Activated T-helper 1 cell treated with anti-CD3 and anti-CD28 coated beads, Interleukin-12 subunit alpha, Interleukin-12 subunit beta, Interleukin-2, Interleukin-4 antibody, amounts not matched to agents 30 ng/mL and 10 ng/mL and 1 ng/mL, durations not matched to agents 14 hours and 24 hours and 36 hours (primary cell): ENCODE measurements at regions of chr11 and their contacts with region 1.

Region 1: DNA sequence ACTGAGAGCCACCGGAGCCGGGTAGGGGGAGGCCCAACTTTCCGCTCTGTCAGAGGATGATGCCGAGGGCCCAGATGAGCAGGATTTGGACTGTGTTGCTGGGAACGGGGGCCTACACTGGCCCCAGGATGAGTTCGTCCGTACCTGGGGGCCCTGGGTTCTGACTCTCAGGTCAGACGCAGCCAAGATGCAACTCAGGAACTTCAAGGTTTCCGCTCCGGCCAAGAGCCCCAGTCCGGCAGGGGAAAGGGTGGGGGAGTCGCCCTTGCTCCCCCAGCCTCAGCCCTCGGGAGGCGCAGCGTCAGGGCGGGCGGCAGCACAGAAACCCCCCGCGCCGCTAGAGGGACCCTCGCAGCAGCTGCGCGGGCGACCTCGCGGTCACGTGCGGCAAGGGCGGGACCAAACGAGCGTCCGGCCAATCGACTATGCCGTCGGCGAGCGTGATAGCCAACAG is 241 bp upstream of the ARL2 start:
- DNase-seq: peak; percentile 83
- H3K4me3 Mint-ChIP-seq: peak overlapping the region; percentile 90
- H3K27ac Mint-ChIP-seq: peak overlapping the region; percentile 99
- H3K4me1 Mint-ChIP-seq: peaks cover 22% of the 10 kb centered on the region
- H3K27me3 Mint-ChIP-seq: peaks cover 2% of the 10 kb centered on the region

Region 2: DNA sequence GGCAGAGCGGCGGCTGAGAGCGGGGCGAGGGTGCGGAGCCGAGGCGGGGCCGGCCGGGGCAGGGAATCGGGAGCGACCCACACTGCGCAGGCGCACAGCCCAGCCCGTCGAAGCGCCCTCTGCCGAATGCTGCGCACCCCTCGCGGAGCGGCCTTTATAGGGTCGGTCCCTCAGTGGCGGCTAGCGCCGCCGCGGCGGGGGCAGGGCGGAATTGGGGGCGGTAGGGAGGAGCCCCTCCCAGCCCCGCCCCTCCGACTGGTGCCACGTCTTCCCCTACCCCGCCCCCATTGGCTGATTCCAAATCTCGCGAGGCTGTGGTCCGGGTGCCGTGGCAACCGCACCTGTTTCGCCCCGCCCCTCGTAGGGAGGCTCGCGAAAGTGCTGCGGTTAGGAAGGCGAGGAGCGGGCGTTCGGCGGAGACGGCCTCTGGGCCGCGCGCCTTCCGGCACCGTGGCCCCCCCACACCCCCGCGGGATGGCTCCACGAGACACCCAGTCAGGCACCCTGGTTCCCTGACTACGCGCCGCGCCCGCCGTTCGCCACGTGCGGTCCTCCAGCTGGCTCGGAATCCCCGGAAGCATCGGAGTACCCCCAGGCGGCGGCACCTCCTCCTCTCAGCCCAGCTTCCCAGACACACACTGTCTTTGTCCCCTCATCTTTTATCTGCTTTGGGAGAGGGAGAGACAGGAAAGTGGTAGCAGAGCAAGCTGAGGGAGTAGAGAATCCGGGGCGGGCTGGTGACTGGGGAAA is 135.1 kb before region 1 on chr11 and contains the start of gene EHD1:
- intact Hi-C with region 1: loop called (anchors 2 kb)
- DNase-seq: peak; percentile 99
- H3K4me3 Mint-ChIP-seq: peak within 1 kb of the TSS; percentile 99
- H3K27ac Mint-ChIP-seq: peak within 1 kb of the TSS; percentile 83
- H3K4me1 Mint-ChIP-seq: peaks cover 64% of the 10 kb centered on the region
- H3K27me3 Mint-ChIP-seq: no peaks in the 10 kb centered on the region
- total RNA-seq, gene EHD1: 88.0 and 96.9 TPM in 2 replicates

Region 3: DNA sequence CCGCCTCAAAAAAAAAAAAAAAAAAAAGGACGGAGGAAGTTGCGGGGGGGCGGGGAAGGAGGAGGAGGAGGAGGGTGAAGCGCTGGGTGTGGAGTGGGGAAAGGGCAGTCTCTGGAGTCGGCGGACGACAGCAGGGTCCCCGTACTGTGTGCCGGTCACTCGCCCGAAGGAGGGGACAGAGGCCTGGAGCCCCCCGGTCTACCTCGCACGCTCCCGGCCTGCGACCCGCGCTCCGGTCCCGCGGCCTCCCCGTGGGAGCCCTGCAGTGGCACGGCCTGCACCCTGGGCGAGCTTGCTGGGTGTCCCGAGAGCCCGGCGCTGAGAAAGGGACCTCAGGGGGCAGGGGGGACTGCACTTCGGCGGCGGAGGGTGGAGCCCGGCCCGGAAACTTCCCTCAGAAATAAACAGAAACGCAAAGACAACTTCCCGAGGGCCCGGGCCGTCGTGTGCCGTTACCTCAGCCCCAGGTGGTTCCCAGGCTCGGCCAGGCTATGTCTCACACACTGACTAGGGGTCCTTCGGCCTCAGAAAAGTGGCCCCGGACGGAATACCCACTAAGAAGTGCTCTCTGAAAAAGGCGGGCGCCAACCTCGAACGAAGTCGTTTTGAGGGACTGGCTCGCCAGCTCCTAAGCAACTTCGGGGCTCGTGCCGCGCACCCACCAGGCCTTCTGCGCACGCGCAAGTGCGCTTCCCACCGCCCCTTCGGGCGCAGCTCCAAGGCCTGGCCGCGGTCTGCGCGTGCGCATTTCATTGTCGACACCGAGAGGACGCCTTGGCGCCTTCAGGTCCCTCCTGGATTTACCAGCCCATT is 42.1 kb before region 1 on chr11 and contains the start of gene MAJIN:
- intact Hi-C with region 1: loop called (anchors 5 kb)
- DNase-seq: peak; percentile 77
- H3K4me3 Mint-ChIP-seq: peak within 1 kb of the TSS; percentile 57
- H3K27ac Mint-ChIP-seq: peak within 1 kb of the TSS; percentile 60
- H3K4me1 Mint-ChIP-seq: peaks cover 31% of the 10 kb centered on the region
- H3K27me3 Mint-ChIP-seq: peaks cover 4% of the 10 kb centered on the region
- total RNA-seq, gene MAJIN: not detected in 2 replicates

Region 4: DNA sequence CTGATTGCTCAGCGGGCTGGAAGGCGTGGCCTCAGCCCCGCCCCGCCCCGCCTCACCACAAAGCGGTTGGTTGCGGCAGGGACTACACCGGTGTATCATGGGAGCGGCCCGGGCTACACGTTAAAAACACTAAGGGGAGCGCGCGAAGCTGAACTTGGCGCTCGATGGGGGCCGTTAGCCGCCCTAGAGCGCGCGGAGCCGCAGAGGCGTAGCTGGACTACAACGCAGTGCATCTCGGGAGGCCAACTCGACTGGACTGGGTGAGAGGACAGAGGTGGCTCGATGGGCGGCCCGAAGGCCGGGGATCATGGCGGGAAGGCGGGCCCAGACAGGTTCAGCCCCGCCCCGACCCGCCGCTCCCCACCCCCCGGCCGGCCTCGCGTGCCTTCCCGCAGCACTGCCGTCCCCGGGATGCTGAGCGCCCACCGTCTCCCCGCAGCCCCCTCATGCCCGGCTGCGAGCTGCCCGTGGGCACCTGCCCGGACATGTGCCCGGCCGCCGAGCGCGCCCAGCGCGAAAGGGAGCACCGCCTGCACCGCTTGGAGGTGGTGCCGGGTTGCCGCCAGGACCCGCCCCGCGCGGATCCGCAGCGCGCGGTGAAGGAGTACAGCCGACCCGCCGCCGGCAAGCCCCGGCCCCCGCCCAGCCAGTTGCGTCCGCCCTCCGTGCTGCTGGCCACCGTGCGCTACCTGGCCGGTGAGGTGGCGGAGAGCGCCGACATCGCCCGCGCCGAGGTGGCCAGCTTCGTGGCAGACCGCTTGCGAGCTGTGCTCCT is 27.3 kb after region 1 on chr11 and contains the start of gene SAC3D1:
- intact Hi-C with region 1: loop called (anchors 1 kb)
- DNase-seq: peak; percentile 90
- H3K4me3 Mint-ChIP-seq: peak within 1 kb of the TSS; percentile 90
- H3K27ac Mint-ChIP-seq: peak within 1 kb of the TSS; percentile 93
- H3K4me1 Mint-ChIP-seq: peaks cover 19% of the 10 kb centered on the region
- H3K27me3 Mint-ChIP-seq: no peaks in the 10 kb centered on the region
- total RNA-seq, gene SAC3D1: 17.4 and 17.7 TPM in 2 replicates

Region 5: DNA sequence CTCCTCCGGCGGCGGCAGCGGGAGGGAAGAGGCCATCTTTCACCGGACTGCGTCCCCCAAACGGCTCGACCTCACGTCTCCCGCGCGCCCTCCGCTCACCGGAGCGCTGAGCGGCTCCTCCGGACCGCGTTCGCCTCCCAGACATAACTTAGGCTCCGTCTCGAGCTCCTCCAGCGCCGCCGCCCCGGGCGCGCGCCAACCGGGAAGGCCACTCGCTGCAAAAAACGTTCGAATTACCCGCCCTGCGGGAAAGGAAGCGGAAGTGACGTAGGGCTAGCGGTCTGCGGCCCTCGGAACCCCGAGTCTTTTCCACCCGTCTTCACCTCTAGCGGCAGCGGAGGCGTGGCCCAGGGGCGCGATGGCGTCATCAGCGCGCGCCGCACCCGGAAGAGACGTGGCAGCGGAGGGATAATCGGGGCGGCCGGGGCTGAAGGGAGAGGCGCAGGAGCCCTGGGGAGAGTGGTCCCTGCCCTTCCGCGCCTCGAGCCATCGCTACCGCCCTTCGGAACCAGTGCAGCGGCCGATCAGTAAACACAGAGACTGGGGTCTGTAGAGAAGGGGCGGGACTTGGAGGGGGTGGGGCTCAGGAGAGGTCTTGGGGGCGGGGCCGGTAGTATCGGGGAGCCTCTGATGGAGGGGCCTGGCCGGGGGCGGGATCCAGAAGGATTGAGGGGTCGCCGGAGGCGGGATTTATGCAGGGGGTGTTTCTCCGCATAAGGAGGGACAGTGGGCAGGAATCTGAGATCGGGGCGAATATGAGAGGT is 70.3 kb after region 1 on chr11 and contains the starts of genes CDCA5 and ZFPL1:
- intact Hi-C with region 1: loop called (anchors 1 kb)
- DNase-seq: peak; percentile 96
- H3K4me3 Mint-ChIP-seq: peak within 1 kb of the TSS; percentile 98
- H3K27ac Mint-ChIP-seq: peak within 1 kb of the TSS; percentile 97
- H3K4me1 Mint-ChIP-seq: peaks cover 59% of the 10 kb centered on the region
- H3K27me3 Mint-ChIP-seq: no peaks in the 10 kb centered on the region
- total RNA-seq, gene CDCA5: 91.8 and 92.5 TPM in 2 replicates
- total RNA-seq, gene ZFPL1: 31.9 and 34.5 TPM in 2 replicates

Region 6: DNA sequence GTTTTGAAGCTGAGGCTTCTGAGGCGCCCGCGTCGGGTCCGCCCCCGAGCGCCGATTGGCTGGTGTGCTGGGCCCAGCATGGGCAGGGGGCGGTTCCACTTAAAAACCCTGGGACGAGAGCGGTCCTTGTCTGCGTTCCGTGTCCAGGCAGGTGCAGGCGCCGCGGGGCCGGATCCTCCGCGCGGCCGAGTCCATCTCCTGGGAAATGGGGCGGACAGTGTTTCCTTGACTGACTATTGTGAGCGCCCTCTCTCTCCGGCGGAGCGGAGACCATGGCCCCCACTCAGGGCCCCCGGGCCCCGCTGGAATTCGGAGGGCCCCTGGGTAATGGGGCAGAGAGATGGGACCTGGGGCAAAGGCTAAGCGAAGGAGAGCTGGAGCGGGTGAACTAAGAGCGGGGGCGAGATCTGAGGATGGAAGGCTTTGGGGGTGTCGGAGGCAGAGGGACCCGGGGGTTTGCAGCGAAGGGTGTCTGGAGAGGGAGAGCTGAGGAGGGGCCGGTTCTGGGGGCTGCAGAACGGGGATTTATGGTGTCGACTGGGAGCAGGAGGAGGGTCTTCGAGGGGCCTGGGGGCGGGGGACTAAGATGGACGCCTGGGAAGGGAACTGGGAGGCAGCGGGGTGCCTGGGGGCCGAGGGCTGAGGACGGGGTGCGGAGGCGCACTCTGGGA is 98.2 kb after region 1 on chr11 and contains the start of gene TM7SF2:
- intact Hi-C with region 1: loop called (anchors 1 kb)
- DNase-seq: peak; percentile 91
- H3K4me3 Mint-ChIP-seq: peak within 1 kb of the TSS; percentile 92
- H3K27ac Mint-ChIP-seq: peak within 1 kb of the TSS; percentile 89
- H3K4me1 Mint-ChIP-seq: peaks cover 34% of the 10 kb centered on the region
- H3K27me3 Mint-ChIP-seq: peaks cover 2% of the 10 kb centered on the region
- total RNA-seq, gene TM7SF2: 32.2 and 32.8 TPM in 2 replicates

Region 7: GRCh38 chr11:65261591-65262380 is 248.1 kb after region 1 on chr11 and contains the start of gene POLA2:
- intact Hi-C with region 1: loop called (anchors 5 kb)
- DNase-seq: peak; percentile 97
- H3K4me3 Mint-ChIP-seq: peak within 1 kb of the TSS; percentile 94
- H3K27ac Mint-ChIP-seq: peak within 1 kb of the TSS; percentile 97
- H3K4me1 Mint-ChIP-seq: peaks cover 47% of the 10 kb centered on the region
- H3K27me3 Mint-ChIP-seq: no peaks in the 10 kb centered on the region
- total RNA-seq, gene POLA2: 78.2 and 78.9 TPM in 2 replicates